ENCODE measurements at regions of chr1 and their contacts with region 1.

Region 1: DNA sequence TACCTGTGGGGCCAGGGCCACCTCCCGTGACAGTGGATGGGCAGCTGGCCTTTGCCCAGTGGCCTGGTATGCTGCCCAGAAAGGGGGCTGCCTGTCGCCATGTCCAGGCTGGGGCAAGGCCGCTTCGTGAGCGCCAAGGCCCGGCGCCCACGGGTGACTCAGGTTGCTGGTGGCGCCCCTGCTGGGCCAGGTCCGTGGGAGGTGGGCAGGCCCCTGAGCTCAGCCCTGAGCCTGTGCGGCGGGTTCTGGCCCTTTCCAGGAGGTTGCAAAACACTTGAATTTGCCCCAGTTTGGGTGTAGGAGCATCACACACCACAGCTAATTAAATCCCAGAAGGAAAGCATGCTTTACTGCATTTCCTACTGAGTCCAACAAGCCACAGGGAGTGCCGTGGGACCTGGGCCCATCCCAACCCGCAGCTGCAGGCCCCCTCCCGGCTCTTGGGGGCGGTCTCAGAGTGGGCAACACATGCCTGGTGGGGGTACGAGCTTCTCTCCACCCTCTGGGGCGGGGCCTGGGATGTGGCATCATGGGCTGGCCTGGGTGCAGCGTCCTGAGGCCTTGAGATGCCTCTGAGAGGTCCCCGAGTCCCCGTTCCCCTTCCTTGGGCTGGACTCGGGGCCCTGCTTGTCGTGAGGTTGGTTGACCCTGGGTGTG is 159.8 kb downstream of the PEX14 start:
- DNase-seq: no peak

Region 2: DNA sequence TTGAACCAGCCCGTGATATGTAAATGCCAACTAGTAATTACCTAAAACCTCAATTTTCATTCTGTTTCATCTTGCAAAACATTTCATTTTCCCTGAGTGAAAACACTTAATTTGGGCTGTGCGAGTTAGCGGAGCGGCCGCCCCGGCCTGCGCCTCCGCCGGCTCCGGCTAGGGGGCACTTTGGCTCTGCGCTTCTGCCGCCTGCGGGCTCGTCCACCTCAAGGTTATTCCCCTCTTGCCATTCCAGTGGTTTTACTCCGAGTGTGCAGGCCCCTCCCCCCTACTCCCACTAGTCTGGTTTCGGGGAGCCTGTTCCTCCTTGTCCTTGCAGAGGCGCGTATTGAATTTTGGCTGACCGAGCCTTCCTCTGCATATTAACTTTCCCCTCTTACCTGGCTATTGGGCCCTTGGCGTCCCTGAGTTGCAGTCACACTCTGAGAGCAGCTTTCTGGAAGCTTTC is 104.2 kb before region 1 on chr1:
- intact Hi-C with region 1: loop called (anchors 2 to 5 kb)
- DNase-seq: no peak

Region 3: GRCh38 chr1:10615332-10615731 is 19.2 kb before region 1 on chr1:
- intact Hi-C with region 1: no loop called
- DNase-seq: no peak

Region 4: GRCh38 chr1:10765734-10766478 is 131.3 kb after region 1 on chr1:
- intact Hi-C with region 1: no loop called
- DNase-seq: no peak

Measured in posterior vena cava (tissue), 2 donors.